ENCODE measurements at regions of chr17 and their contacts with region 1.

Region 1: GRCh38 chr17:76072148-76072858 is at the start of gene SRP68:
- DNase-seq: peak; percentile 96
- ATAC-seq: peak; percentile 99
- H3K4me3 ChIP-seq: peak within 1 kb of the TSS; percentile 75
- H3K27ac ChIP-seq: peak within 1 kb of the TSS; percentile 33
- H3K4me1 ChIP-seq: peaks cover 22% of the 10 kb centered on the region
- H3K27me3 ChIP-seq: peaks cover 34% of the 10 kb centered on the region
- CTCF ChIP-seq: no peak
- total RNA-seq, gene SRP68: 60.8 and 71.4 TPM in 2 replicates

Region 2: GRCh38 chr17:76027159-76027839 is 45.0 kb before region 1 on chr17 and contains the start of gene EVPL:
- CTCF ChIA-PET with region 1: no interaction called
- POLR2A ChIA-PET with region 1: no interaction called
- intact Hi-C with region 1: loop called (anchors 5 kb)
- DNase-seq: peak; percentile 98
- ATAC-seq: peak; percentile 94
- H3K4me3 ChIP-seq: peak within 1 kb of the TSS; percentile 91
- H3K27ac ChIP-seq: peak within 1 kb of the TSS; percentile 55
- H3K4me1 ChIP-seq: peaks cover 21% of the 10 kb centered on the region
- H3K27me3 ChIP-seq: no peaks in the 10 kb centered on the region
- CTCF ChIP-seq: no peak
- total RNA-seq, gene EVPL: 38.8 and 48.3 TPM in 2 replicates